Activated naive CD4-positive, alpha-beta T cell treated with anti-CD3 and anti-CD28 coated beads for 36 hours (primary cell): ENCODE measurements at regions of chr16 and their contacts with region 1.

Region 1: GRCh38 chr16:25111403-25112166 is at the start of gene LCMT1:
- DNase-seq: peak; percentile 97
- H3K4me3 Mint-ChIP-seq: peak within 1 kb of the TSS; percentile 94
- H3K27ac Mint-ChIP-seq: peak within 1 kb of the TSS; percentile 96
- H3K4me1 Mint-ChIP-seq: peaks cover 47% of the 10 kb centered on the region
- H3K27me3 Mint-ChIP-seq: no peaks in the 10 kb centered on the region
- total RNA-seq, gene LCMT1: 34.7 to 35.3 TPM

Region 2: DNA sequence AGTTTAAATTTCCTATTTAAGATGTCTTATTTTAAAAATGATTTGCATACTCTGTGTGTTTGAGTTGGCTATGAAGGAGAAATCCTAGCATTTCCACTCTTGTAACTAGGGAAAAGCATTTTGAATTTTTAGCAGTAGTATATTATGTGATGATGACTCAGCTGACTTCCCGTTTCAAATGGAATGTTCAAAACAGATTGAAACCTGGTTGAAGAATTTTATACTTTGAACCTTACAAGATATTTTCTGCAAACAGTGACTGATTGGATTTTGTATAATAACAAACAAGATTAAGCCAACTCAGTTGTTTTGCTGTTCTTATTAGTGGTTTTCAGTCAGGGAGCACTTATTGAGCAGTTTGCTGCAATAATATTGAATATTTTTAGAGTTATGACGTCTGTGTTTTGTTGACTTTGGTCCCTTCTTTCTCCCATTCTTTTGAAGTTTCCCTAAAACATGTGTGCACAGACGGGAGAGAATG is 374.2 kb before region 1 on chr16:
- CTCF ChIA-PET with region 1: no interaction called
- intact Hi-C with region 1: no loop called
- DNase-seq: no peak
- H3K4me3 Mint-ChIP-seq: no peak overlapping the region
- H3K27ac Mint-ChIP-seq: no peak overlapping the region
- H3K4me1 Mint-ChIP-seq: peaks cover 90% of the 10 kb centered on the region
- H3K27me3 Mint-ChIP-seq: no peaks in the 10 kb centered on the region

Region 3: DNA sequence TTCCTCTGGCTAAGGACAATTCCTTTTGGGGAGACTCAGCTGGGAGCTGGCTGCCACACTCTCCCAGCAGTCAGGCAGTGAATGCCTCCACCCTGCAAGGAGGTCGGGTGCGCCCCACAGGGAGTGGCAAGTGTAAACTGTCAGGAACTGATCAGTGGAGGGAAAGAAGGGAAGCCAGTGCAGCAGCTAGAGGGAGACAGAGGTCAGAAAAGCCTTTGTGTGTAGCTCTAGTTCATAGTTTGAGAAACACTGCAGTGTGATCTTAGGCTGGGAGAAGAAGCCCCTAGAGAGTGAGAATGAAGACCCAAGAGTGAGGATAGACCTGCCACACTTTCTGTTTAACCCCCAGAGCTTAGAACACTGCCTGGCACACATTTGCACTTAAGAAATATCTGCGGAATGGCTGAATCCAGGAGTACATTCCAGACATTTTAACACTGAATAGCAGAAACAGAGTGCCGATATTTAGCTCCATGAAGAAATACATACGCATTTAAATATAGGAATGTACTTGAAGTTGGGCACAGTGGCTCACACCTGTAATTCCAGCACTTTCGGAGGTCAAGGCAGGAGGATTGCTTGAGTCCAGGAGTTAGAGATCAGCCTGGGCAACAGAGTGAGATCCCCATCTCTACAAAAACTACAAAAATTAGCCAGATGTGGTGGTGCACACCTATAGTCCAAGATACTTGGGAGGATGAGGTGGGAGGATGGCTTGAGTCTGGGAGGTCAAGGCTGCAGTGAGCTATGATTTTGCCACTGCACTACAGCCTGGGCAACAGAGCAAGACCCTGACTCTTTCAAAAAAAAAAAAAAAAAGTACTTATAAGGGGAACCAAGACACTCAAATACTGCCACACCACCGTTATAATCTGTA is 276.9 kb before region 1 on chr16:
- CTCF ChIA-PET with region 1: no interaction called
- intact Hi-C with region 1: loop called (anchors 5 kb)
- DNase-seq: peak; percentile 37
- H3K4me3 Mint-ChIP-seq: no peak overlapping the region
- H3K27ac Mint-ChIP-seq: no peak overlapping the region
- H3K4me1 Mint-ChIP-seq: no peaks in the 10 kb centered on the region
- H3K27me3 Mint-ChIP-seq: no peaks in the 10 kb centered on the region

Region 4: DNA sequence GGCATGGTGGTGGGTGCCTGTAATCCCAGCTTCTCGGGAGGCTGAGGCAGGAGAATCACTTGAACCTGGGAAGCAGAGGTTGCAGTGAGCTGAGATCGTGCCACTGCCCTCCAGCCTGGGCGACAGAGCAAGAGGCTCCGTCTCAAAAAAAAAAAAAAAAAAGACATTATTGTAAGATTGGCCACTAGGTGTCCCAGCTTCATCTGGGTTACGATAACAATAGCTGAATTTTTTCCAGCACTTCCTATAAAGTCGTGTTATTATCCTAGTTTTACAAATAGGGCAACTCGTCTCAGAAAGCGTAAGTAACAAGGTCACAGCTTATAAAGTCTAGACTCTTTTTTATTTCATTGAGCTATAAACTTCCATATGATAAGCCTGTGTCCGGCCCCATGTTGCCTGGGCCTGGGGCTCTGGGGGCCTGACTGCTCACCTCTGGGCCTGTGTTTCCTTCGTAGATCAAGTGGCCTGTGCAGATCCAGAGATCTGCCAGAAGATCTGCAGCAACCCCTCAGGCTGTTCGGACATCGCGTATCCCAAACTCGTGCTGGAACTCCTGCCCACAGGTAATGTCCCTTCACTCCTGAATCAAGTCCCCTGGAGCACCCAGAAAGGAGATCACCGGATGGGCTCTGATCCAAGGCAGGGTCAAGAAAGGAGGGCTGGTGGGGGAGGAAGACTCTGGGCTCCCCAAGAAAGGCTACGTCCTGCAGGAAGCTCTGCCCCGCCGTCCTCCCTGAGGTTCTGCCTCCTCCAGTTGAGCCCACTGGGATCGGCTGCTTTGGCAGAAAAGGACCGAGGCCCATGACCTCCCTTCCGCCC is 205.2 kb before region 1 on chr16:
- CTCF ChIA-PET with region 1: no interaction called
- intact Hi-C with region 1: loop called (anchors 5 kb)
- DNase-seq: no peak
- H3K4me3 Mint-ChIP-seq: no peak overlapping the region
- H3K27ac Mint-ChIP-seq: no peak overlapping the region
- H3K4me1 Mint-ChIP-seq: peaks cover 3% of the 10 kb centered on the region
- H3K27me3 Mint-ChIP-seq: no peaks in the 10 kb centered on the region

Region 5: GRCh38 chr16:25031441-25032307 is 79.9 kb before region 1 on chr16:
- CTCF ChIA-PET with region 1: no interaction called
- intact Hi-C with region 1: loop called (anchors 1 kb)
- DNase-seq: peak; percentile 96
- H3K4me3 Mint-ChIP-seq: peak overlapping the region; percentile 83
- H3K27ac Mint-ChIP-seq: peak overlapping the region; percentile 98
- H3K4me1 Mint-ChIP-seq: peaks cover 52% of the 10 kb centered on the region
- H3K27me3 Mint-ChIP-seq: no peaks in the 10 kb centered on the region

Region 6: DNA sequence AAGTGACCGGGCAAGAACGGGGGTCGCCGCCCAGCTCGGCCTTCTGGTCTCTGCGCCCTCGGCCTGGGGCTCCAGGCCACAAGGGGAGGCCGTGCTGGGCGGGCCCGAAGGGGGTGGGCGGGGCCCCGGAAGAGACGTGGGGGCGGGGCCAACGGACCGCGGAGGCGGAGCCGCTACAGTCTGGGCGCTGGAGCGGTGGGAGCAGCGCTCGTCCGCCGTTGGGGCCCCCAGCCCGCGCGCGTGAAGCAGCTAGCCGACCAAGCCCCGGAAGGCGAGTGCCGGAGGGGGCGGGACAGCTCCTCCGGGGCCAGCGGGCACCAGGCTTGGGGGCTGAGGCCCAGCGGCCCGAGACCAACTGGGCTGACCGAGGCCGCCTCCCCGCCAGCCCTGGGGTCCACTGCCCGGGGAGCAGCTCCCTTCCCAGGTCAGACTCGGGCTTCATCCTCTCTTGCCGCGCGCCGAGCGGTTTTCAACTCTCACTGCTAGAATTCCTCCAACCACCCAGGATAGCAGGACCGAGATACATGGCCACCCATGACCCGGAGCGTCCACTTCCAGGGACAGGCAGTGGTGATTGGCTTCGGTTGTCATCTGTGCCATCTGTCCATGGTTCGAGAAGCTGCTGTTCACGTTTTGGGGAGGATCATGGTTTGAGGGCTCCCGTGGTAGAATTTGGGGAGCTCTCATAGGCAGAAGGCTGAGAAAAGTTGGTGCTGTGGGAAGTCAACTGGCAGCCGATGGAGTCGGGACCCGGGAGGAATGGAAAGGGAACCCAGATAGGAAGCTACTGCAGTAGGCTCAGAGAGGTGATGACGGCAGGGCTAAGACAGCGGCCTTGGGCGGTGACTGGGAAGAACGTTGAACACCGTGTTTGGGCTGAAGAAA is 44.6 kb before region 1 on chr16:
- CTCF ChIA-PET with region 1: interaction called, 4 read pairs
- intact Hi-C with region 1: loop called (anchors 1 kb)
- DNase-seq: peak; percentile 86
- H3K4me3 Mint-ChIP-seq: peak overlapping the region; percentile 92
- H3K27ac Mint-ChIP-seq: peak overlapping the region; percentile 80
- H3K4me1 Mint-ChIP-seq: peaks cover 42% of the 10 kb centered on the region
- H3K27me3 Mint-ChIP-seq: peaks cover 2% of the 10 kb centered on the region

Region 7: DNA sequence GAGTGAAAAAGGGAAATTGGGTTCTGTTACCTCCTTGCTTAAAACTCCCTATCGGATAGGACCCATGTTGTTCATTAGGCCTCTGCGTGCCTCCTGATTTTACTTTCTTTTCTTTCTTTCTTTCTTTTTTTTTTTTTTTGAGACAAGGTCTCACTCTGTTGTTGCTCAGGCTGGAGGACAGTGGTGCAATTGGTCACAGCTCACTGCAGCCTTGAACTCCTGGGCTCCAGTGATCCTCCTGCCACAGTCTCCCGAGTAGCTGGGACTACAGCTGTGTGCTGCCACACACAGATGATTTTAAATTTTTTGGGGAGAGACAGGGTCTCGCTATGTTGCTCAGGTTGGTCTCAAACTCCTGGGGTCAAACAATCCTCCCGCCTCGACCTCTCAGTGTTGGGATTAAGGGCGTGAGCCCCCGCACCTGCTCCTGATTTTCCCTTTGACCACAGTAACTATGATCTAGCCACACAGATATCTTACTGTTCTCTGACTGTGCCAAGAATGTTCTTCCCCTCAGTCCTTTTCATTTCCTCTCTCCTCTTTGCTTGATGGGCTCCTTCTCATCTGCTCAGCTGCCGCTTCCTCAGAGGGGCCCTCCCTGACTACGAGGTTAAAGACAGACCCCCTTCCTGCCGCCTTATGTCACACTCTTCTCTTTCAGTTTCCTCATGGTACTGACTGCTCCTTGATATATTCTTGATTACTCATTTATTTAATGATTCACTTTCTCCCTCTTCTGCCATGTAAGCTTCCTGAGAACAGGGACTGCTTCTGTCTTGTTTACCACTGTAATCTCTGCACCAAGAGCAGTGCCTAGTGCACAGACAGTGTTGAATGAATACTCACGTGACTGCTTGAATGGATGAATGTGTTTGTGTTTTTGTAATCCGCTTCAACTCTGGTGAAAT is 44.2 kb after region 1 on chr16:
- CTCF ChIA-PET with region 1: no interaction called
- intact Hi-C with region 1: loop called (anchors 1 kb)
- DNase-seq: peak; percentile 85
- H3K4me3 Mint-ChIP-seq: no peak overlapping the region
- H3K27ac Mint-ChIP-seq: peak overlapping the region; percentile 82
- H3K4me1 Mint-ChIP-seq: peaks cover 19% of the 10 kb centered on the region
- H3K27me3 Mint-ChIP-seq: no peaks in the 10 kb centered on the region